Activated CD4-positive, alpha-beta T cell treated with anti-CD3 and anti-CD28 coated beads for 36 hours (primary cell): ENCODE measurements at regions of chr2 and their contacts with region 1.

Region 1: DNA sequence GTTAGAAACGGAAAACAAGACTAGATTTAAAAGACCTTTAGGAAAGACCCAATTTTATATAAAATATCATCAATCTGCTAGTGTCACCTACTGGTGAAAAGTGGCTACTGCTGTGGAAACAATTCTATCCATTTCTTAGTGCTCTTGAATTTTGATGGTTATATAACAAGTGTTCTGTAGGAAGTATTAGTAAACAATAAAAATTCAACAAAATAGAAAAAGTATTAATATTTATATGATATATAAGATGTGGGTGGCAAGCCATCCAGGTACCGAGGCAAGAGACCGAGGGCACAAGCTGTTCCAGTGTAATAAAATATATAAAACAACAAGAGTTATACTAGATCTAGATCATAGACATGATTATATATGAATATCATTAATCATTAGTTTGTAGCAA is 6.2 kb upstream of the TMEM87B start:
- DNase-seq: peak; percentile 33
- ATAC-seq: peak; percentile 49
- H3K4me3 Mint-ChIP-seq: no peak overlapping the region
- H3K27ac Mint-ChIP-seq: no peak overlapping the region
- H3K4me1 Mint-ChIP-seq: peaks cover 6% of the 10 kb centered on the region
- H3K27me3 Mint-ChIP-seq: peaks cover 5% of the 10 kb centered on the region

Region 2: DNA sequence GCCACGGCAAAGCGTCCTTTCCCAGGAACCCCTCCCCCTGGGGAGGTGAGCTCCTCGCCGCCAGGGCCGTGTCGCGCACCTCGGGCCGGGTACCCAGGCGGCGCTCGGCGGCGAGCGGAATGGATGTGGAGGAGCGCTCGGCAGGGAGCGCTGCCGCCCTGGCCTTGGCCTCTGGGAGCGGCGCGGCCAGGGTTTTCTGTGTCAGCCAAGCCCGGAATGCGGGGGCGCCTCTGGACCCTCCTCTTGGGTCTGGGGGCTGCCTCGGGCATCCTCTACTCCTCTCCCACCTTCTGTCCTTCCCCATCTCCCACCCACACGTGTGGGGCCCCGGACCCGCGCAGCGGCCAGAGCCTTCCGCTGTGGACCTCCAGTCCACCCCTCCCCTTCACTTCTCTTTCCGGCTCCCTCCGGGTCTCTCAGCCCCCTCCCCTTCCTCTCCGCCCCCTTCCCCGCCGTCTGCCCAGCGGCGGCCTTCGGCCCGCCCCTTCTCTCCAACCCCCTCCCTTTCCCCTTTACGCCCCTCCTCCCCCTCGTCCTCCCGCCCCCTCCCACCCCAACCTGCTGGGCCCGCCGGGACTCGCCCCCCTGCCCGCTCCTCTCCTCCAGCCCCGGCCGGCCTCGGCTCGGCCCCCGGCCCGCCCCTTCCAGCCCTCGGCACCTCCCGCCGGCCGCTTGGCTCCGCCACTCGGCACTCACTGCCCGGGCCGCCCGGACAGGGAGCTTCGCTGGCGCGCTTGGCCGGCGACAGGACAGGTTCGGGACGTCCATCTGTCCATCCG is 150.8 kb before region 1 on chr2 and contains the start of gene MERTK:
- CTCF ChIA-PET with region 1: interaction called, 13 read pairs
- POLR2A ChIA-PET with region 1: no interaction called
- intact Hi-C with region 1: loop called in 1 of 2 experiments (anchors 2 kb)
- DNase-seq: peak; percentile 83
- ATAC-seq: peak; percentile 96
- H3K4me3 Mint-ChIP-seq: peak within 1 kb of the TSS; percentile 73
- H3K27ac Mint-ChIP-seq: no peak within 1 kb of the TSS
- H3K4me1 Mint-ChIP-seq: peaks cover 7% of the 10 kb centered on the region
- H3K27me3 Mint-ChIP-seq: peaks cover 15% of the 10 kb centered on the region
- total RNA-seq, gene MERTK: 0.94 to 1.4 TPM

Region 3: GRCh38 chr2:111930875-111931274 is 118.0 kb before region 1 on chr2:
- CTCF ChIA-PET with region 1: no interaction called
- POLR2A ChIA-PET with region 1: no interaction called
- intact Hi-C with region 1: no loop called
- DNase-seq: peak; percentile 50
- ATAC-seq: peak; percentile 95
- H3K4me3 Mint-ChIP-seq: no peak overlapping the region
- H3K27ac Mint-ChIP-seq: peak overlapping the region; percentile 86
- H3K4me1 Mint-ChIP-seq: peaks cover 15% of the 10 kb centered on the region
- H3K27me3 Mint-ChIP-seq: peaks cover 9% of the 10 kb centered on the region